ENCODE measurements at regions of chr9 and their contacts with region 1.

Region 1: DNA sequence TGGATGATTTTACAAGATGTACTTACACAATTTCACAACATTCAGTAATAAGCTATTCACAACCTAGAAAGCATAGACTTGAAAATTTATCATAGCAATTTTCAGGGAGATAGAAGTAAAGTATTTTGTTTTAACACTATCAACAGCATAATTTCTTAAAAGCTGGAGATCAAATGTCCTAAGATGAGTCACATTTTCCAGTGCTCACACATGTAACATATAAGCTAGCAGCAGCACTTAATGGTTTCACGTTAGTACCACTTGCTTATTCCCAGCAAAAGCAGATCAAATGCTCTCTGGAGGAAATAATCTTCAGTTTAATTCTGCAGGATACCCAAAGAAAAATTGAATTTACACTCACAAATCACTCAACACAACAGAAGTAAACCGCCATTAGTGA is 6.5 kb downstream of the OR13C8 start:
- DNase-seq: no peak
- ATAC-seq: no peak
- H3K4me3 ChIP-seq: no peak overlapping the region
- H3K27ac ChIP-seq: no peak overlapping the region
- H3K4me1 ChIP-seq: no peaks in the 10 kb centered on the region
- H3K27me3 ChIP-seq: no peaks in the 10 kb centered on the region
- CTCF ChIP-seq: no peak
- POLR2A ChIP-seq: no peak
- RAD21 ChIP-seq: no peak

Region 2: GRCh38 chr9:104514901-104515300 is 60.6 kb before region 1 on chr9:
- CTCF ChIA-PET with region 1: no interaction called
- POLR2A ChIA-PET with region 1: no interaction called
- dilution Hi-C with region 1: no loop called
- in situ Hi-C with region 1: no loop called
- intact Hi-C with region 1: loop called (anchors 10 kb)
- DNase-seq: no peak
- ATAC-seq: no peak
- H3K4me3 ChIP-seq: no peak overlapping the region
- H3K27ac ChIP-seq: no peak overlapping the region
- H3K4me1 ChIP-seq: no peaks in the 10 kb centered on the region
- H3K27me3 ChIP-seq: no peaks in the 10 kb centered on the region
- CTCF ChIP-seq: no peak
- POLR2A ChIP-seq: no peak
- RAD21 ChIP-seq: no peak